Spleen (tissue), 13 donors: ENCODE measurements at regions of chr4 and their contacts with region 1.

Region 1: GRCh38 chr4:70927502-70928137 is 25.5 kb downstream of the MOB1B start:
- DNase-seq: no peak
- H3K4me3 ChIP-seq: peak overlapping the region in 1 of 8 donors; percentile 23
- H3K27ac ChIP-seq: peak overlapping the region in 6 of 8 donors; percentile 11 to 68 (median 52)
- H3K4me1 ChIP-seq: peaks cover 7 to 56% (median 38%) of the 10 kb centered on the region in 6 donors
- H3K27me3 ChIP-seq: no peaks in the 10 kb centered on the region
- CTCF ChIP-seq: no peak
- POLR2A ChIP-seq: no peak

Region 2: GRCh38 chr4:70979445-70980008 is 51.9 kb after region 1 on chr4:
- intact Hi-C with region 1: loop called (anchors 10 kb)
- DNase-seq: no peak
- H3K4me3 ChIP-seq: no peak overlapping the region
- H3K27ac ChIP-seq: peak overlapping the region in 5 of 8 donors; percentile 16 to 54 (median 37)
- H3K4me1 ChIP-seq: peaks cover 0 to 17% (median 9%) of the 10 kb centered on the region in 6 donors
- H3K27me3 ChIP-seq: no peaks in the 10 kb centered on the region
- CTCF ChIP-seq: no peak
- POLR2A ChIP-seq: no peak

Region 3: DNA sequence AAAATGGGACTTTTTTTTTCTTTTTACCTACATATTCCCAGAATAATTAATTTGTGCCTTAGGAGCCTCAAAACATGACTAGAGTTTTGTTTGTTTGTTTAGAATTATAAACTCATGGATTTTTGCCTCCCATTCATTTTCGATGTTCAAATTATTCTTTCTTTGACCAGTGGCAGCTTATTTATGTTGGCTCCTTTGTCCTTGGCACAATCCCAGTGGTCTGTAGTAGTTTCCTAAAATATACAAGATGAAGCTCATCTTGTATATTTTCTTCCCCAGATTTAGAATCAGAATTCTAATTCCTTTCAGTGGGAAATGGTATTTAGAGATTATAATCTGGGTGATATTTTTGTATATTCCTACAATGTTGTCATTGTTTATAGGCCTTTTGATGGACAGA is 93.0 kb after region 1 on chr4:
- intact Hi-C with region 1: no loop called
- DNase-seq: no peak
- H3K4me3 ChIP-seq: no peak overlapping the region
- H3K27ac ChIP-seq: no peak overlapping the region
- H3K4me1 ChIP-seq: peaks cover 0 to under 1% (median 0%) of the 10 kb centered on the region in 6 donors
- H3K27me3 ChIP-seq: no peaks in the 10 kb centered on the region
- CTCF ChIP-seq: no peak
- POLR2A ChIP-seq: no peak